Posterior cingulate gyrus (tissue), 11 donors: ENCODE measurements at regions of chr15 and their contacts with region 1.

Region 1: DNA sequence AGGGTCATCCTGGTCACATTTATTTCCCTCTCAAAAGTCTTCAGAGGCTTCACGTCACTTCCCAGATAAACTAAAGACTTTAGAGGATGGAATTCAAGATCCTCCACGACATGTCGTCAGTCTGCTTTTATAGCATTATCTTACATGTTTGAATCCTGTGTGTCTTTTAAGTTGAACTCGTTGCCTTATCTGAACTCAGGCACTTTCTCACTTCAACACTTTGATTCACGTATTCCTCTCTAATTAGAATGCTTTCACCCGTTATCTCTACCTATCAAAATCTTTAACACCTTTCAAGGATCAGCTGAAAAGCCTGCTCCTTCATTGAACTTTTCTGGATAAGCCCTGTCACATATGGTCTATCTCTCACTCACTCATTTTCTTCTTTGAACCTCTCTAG is 97.1 kb downstream of the MAP2K5 start:
- DNase-seq: no peak

Region 2: DNA sequence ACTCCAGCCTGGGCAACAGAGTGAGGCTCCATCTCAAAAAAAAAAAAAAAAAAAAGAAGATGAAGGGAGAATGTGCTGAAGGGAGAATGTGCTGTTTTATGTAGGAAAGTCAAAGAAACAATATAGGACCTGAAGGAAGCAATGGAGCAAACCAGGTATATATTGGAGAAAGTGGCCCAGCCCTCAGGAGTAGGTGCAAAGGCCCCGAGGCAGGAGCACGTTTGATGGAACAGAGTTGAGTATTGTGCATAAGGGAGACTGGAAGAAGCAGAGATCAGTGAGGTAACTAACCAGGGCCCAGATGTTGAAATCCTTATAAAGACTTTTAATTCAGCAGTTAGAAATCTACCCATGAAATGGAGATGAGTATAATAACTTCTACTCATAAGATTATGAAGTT is 17.5 kb before region 1 on chr15:
- intact Hi-C with region 1: loop called (anchors 1 kb)
- DNase-seq: no peak

Region 3: DNA sequence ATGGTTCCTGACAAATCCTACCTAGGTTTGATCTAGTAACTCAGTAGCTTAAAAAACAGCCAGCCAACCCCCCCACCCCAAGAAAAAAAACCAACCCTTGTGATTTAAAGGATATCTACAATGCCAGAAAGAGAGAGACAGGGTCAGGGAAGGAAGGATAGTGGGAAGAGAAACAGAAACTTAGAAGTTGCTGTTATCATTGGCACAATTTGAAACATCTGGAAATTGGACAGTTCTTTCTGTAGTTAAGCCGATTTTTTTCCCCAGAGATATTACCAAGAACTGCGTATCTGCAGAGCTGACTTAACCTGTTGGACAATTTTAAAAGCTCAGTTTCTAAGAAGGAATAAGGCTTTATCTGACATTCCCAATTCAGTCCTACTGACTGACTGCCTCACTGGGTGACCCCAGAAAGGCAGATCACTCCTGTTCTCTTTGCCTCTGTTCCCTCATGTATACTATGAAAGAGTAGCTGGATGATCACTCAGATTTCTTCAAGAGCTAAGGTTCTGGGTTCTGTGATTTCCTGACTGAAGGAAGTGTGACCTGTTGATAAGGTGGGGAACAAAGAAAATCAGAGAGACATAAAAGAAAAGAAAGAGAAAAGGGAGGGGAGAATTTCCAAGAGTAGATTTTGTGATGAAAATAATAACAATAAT is 31.2 kb after region 1 on chr15:
- intact Hi-C with region 1: no loop called
- DNase-seq: no peak

Region 4: DNA sequence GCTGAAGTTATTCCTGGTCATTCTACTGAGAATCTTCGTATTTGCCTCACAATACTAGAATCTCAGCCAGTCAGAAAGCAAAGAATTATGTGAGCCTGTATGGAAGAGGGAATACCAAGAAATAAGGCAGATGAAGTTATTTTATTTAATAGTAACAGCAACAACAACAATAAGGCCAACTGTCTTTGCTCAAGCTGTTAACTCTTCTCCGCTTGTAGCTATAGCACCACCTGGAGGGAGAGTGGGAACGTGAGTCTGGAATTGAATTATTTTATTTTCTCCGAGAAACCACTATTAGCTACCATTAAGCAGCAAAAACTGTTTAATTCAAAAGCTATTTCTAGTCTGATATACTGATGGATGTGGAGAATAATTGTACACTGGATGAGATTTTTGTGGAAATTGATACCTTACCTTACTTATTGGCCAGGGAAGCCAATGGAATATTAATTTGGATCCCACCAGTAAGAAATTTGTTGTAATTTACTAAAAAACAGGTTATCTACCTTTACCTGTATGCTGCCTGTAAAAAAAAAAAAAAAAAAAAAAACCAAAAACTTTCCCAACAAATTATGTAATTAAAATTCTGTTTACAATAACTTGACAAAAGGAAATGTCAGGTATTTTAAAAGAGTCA is 515.5 kb after region 1 on chr15:
- intact Hi-C with region 1: no loop called
- DNase-seq: peak in 5 of 10 donors; percentile 18 to 43 (median 36)